B cell (primary cell): ENCODE measurements at regions of chr3 and their contacts with region 1.

Region 1: GRCh38 chr3:9890249-9891071 is at the start of gene JAGN1:
- DNase-seq: peak; percentile 95
- ATAC-seq: peak; percentile 84
- H3K4me3 ChIP-seq: peak within 1 kb of the TSS; percentile 81 to 99 (median 98)
- H3K4me3 Mint-ChIP-seq: peak within 1 kb of the TSS; percentile 99
- H3K27ac ChIP-seq: peak within 1 kb of the TSS; percentile 100
- H3K27ac Mint-ChIP-seq: peak within 1 kb of the TSS; percentile 99
- H3K4me1 ChIP-seq: peaks cover 17 to 24% of the 10 kb centered on the region in 2 donors
- H3K4me1 Mint-ChIP-seq: peaks cover 38% of the 10 kb centered on the region
- H3K27me3 ChIP-seq: no peaks in the 10 kb centered on the region
- H3K27me3 Mint-ChIP-seq: no peaks in the 10 kb centered on the region
- CTCF ChIP-seq: no peak
- total RNA-seq, gene JAGN1: 25.7 and 26.2 TPM in 2 replicates

Region 2: DNA sequence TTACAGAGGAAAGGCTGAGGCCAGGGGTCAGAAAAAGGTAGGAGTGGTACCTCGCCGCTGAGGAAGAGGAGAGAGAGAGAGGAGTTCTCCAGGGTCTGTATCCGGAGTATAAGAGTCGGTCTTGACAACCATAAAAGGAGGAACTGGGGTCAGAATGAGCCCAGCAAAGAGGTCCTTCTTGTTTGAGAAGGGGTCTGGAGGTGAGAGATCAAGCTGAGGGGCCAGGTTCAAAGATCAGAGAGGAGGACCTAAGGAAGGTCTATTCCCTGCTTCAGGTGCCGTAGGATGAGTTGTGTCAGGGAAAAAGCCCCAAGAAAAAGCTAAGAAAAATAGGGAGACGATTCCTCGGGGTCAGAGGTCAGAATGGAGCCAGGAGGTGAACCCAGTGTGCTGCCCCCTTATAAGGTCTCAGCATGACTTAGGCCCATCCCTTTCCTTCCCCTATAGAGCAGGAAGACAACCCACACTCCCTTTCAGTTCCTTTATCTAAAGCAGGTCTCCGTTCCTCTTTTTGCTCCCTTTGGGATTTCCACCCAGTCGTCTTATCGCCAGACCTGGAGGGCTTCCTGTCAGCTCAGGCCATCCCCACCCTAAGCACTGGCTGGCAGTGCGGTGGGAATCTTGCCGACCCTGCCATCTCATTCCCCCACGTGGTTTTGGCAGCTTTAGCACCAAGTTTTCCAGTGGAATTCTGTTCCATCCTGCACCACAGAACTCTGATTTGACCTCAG is 240.5 kb before region 1 on chr3:
- CTCF ChIA-PET with region 1: no interaction called
- POLR2A ChIA-PET with region 1: interaction called, 3 read pairs
- intact Hi-C with region 1: loop called (anchors 1 kb)
- DNase-seq: peak; percentile 81
- ATAC-seq: peak; percentile 44
- H3K4me3 ChIP-seq: peak overlapping the region; percentile 85 to 99 (median 99)
- H3K4me3 Mint-ChIP-seq: peak overlapping the region; percentile 95
- H3K27ac ChIP-seq: peak overlapping the region; percentile 92 to 95
- H3K27ac Mint-ChIP-seq: peak overlapping the region; percentile 97
- H3K4me1 ChIP-seq: peaks cover 43 to 59% of the 10 kb centered on the region in 2 donors
- H3K4me1 Mint-ChIP-seq: peaks cover 48% of the 10 kb centered on the region
- H3K27me3 ChIP-seq: no peaks in the 10 kb centered on the region
- H3K27me3 Mint-ChIP-seq: no peaks in the 10 kb centered on the region
- CTCF ChIP-seq: no peak

Region 3: GRCh38 chr3:9843715-9844438 is 46.6 kb before region 1 on chr3 and contains the start of gene RPUSD3:
- CTCF ChIA-PET with region 1: no interaction called
- POLR2A ChIA-PET with region 1: no interaction called
- intact Hi-C with region 1: loop called (anchors 1 kb)
- DNase-seq: peak; percentile 97
- ATAC-seq: peak; percentile 100
- H3K4me3 ChIP-seq: peak within 1 kb of the TSS; percentile 60 to 96 (median 73)
- H3K4me3 Mint-ChIP-seq: peak within 1 kb of the TSS; percentile 98
- H3K27ac ChIP-seq: peak within 1 kb of the TSS; percentile 17 to 75
- H3K27ac Mint-ChIP-seq: peak within 1 kb of the TSS; percentile 92
- H3K4me1 ChIP-seq: peaks cover 8 to 17% of the 10 kb centered on the region in 2 donors
- H3K4me1 Mint-ChIP-seq: peaks cover 20% of the 10 kb centered on the region
- H3K27me3 ChIP-seq: no peaks in the 10 kb centered on the region
- H3K27me3 Mint-ChIP-seq: no peaks in the 10 kb centered on the region
- CTCF ChIP-seq: no peak
- total RNA-seq, gene RPUSD3: 60.7 and 62.1 TPM in 2 replicates

Region 4: GRCh38 chr3:9946112-9947024 is 55.9 kb after region 1 on chr3:
- CTCF ChIA-PET with region 1: no interaction called
- POLR2A ChIA-PET with region 1: interaction called, 3 read pairs
- intact Hi-C with region 1: loop called (anchors 1 kb)
- DNase-seq: peak; percentile 79
- ATAC-seq: peak; percentile 92
- H3K4me3 ChIP-seq: peak overlapping the region in 3 of 5 experiments; percentile 27 to 51 (median 50)
- H3K4me3 Mint-ChIP-seq: peak overlapping the region; percentile 89
- H3K27ac ChIP-seq: no peak overlapping the region
- H3K27ac Mint-ChIP-seq: peak overlapping the region; percentile 85
- H3K4me1 ChIP-seq: peaks cover 6 to 13% of the 10 kb centered on the region in 2 donors
- H3K4me1 Mint-ChIP-seq: peaks cover 11% of the 10 kb centered on the region
- H3K27me3 ChIP-seq: peaks cover 0 to 4% (median 0%) of the 10 kb centered on the region in 4 experiments
- H3K27me3 Mint-ChIP-seq: no peaks in the 10 kb centered on the region
- CTCF ChIP-seq: peak; percentile 69

Region 5: DNA sequence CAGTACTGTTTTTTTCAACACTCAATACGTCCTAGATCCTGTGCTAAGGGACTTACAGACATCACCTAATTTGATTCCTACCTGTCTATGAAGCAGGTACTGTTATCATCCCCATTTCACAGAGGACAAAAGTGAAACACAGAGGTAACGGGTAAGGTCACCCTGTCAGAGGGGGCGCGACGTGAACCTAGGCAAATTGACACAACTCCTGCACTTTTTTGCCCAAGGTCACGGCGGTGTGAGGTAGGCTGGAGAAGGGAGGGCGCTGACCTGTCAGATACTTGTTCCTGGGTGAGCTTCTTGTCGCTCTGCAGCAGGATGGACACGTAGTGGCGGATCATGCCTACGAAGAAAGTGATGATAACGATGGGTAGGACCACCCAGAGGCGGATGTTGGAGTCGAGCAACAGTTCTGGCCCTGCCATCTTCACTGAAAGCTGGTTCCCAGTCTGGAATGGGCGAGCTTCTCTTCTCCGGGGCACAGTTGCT is 95.8 kb after region 1 on chr3:
- CTCF ChIA-PET with region 1: no interaction called
- POLR2A ChIA-PET with region 1: no interaction called
- intact Hi-C with region 1: loop called (anchors 1 kb)
- DNase-seq: no peak
- ATAC-seq: peak; percentile 28
- H3K4me3 ChIP-seq: peak overlapping the region; percentile 71 to 96 (median 82)
- H3K4me3 Mint-ChIP-seq: peak overlapping the region; percentile 98
- H3K27ac ChIP-seq: peak overlapping the region; percentile 88 to 97
- H3K27ac Mint-ChIP-seq: peak overlapping the region; percentile 100
- H3K4me1 ChIP-seq: peaks cover 16 to 22% of the 10 kb centered on the region in 2 donors
- H3K4me1 Mint-ChIP-seq: peaks cover 28% of the 10 kb centered on the region
- H3K27me3 ChIP-seq: no peaks in the 10 kb centered on the region
- H3K27me3 Mint-ChIP-seq: no peaks in the 10 kb centered on the region
- CTCF ChIP-seq: no peak

Region 6: DNA sequence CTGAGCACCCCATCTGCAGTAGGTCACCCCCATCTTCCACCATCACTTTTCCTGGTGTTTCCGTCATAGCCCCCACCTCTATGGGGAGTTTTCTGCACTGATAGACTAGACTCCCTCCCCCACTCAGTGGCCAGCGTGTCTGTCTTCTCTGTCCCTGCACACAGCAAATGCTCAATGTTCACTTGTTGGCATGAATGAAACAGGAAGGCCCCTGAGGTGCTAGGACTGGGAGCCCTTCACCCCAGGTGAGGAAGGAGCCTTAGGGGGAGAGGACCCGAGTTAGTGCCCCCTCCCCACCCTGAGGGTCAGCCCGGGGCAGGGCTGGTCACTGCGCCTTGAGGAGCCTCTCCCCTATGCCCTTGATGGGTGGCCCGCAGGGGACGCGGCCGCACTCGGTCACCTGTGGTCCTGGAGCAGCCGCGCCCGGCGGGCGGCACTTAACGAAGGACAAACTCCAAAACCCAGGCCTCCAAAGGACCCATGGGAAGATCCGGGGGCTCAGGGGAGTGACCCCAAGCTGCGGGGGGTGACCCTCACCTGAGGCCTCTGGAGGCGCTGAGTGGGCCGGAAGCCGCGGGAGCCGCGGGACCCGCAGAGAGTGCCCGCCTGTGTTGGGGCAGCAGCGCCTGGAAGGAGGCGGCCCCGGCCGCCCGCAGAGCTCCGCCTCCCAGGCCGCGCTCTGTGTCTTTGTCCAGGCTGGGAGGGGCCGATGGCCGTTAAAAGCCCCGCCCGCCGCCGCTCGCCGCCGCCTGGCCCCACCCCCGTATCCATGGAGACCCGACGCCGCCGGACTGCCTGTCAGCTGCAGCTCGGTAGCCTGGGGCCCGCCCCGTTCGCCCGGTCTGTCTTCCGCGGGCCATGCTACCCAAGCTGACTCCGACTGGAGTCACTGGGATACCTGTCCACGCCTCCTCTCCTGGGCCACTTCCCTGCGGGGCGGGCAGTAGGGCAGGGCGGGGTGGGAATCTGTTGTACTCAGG is 120.3 kb after region 1 on chr3:
- CTCF ChIA-PET with region 1: no interaction called
- POLR2A ChIA-PET with region 1: no interaction called
- intact Hi-C with region 1: loop called (anchors 1 kb)
- DNase-seq: peak; percentile 86
- ATAC-seq: peak; percentile 86
- H3K4me3 ChIP-seq: peak overlapping the region in 4 of 5 experiments; percentile 46 to 64 (median 57)
- H3K4me3 Mint-ChIP-seq: peak overlapping the region; percentile 85
- H3K27ac ChIP-seq: no peak overlapping the region
- H3K27ac Mint-ChIP-seq: no peak overlapping the region
- H3K4me1 ChIP-seq: peaks cover 14 to 29% of the 10 kb centered on the region in 2 donors
- H3K4me1 Mint-ChIP-seq: peaks cover 20% of the 10 kb centered on the region
- H3K27me3 ChIP-seq: no peaks in the 10 kb centered on the region
- H3K27me3 Mint-ChIP-seq: no peaks in the 10 kb centered on the region
- CTCF ChIP-seq: no peak